ENCODE measurements at regions of chr3 and their contacts with region 1.

Region 1: GRCh38 chr3:152222327-152222726 is 46.4 kb upstream of the MBNL1 start:
- DNase-seq: no peak
- H3K4me3 Mint-ChIP-seq: peak overlapping the region; percentile 38
- H3K27ac Mint-ChIP-seq: peak overlapping the region; percentile 81
- H3K4me1 Mint-ChIP-seq: peaks cover 74% of the 10 kb centered on the region
- H3K27me3 Mint-ChIP-seq: no peaks in the 10 kb centered on the region

Region 2: DNA sequence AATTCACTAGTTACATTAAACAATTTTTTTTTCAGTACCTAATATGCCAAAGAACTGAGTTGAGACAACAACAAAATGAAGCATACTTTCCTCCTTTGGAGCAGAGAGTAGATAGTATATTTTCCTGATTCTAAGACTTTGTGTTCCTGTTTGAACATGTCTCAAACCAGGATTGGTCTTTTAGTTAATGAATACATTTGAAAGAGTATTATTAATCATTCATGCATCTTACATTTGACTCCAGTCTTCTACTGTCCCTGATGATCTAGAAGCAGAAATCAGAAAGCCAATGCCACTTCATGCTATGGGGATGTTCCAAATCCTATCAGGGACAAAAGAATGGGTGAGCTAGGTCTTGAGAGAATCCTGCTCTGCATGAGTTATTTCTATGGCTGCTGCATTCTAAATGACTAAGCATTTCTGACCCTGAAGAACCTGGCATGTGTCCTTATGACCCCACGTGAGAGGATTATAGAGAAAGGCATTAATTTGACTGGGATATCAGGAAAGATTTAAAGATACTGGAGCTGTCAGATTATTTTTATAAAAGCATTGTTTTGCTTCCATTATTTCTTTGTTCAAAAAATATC is 13.5 kb after region 1 on chr3:
- intact Hi-C with region 1: loop called (anchors 1 kb)
- DNase-seq: no peak
- H3K4me3 Mint-ChIP-seq: no peak overlapping the region
- H3K27ac Mint-ChIP-seq: no peak overlapping the region
- H3K4me1 Mint-ChIP-seq: peaks cover 86% of the 10 kb centered on the region
- H3K27me3 Mint-ChIP-seq: no peaks in the 10 kb centered on the region

Measured in activated T-helper 1 cell treated with anti-CD3 and anti-CD28 coated beads, Interleukin-12 subunit alpha, Interleukin-12 subunit beta, Interleukin-2, Interleukin-4 antibody, amounts not matched to agents 30 ng/mL and 10 ng/mL and 1 ng/mL, durations not matched to agents 14 hours and 24 hours and 36 hours (primary cell).